ENCODE measurements at regions of chr2 and their contacts with region 1.

Region 1: GRCh38 chr2:182625814-182626213 is 90.2 kb upstream of the DNAJC10 start:
- DNase-seq: no peak
- ATAC-seq: no peak
- H3K4me3 ChIP-seq: no peak overlapping the region
- H3K27ac ChIP-seq: no peak overlapping the region
- H3K4me1 ChIP-seq: peaks cover 0 to 6% (median 0%) of the 10 kb centered on the region in 9 donors
- H3K27me3 ChIP-seq: no peaks in the 10 kb centered on the region
- CTCF ChIP-seq: no peak

Region 2: GRCh38 chr2:182447863-182448262 is 178.0 kb before region 1 on chr2:
- intact Hi-C with region 1: loop called in 1 of 10 experiments (anchors 10 kb)
- DNase-seq: no peak
- ATAC-seq: peak in 2 of 8 donors; percentile 38 to 70
- H3K4me3 ChIP-seq: no peak overlapping the region
- H3K27ac ChIP-seq: no peak overlapping the region
- H3K4me1 ChIP-seq: peaks cover 0 to 27% (median 9%) of the 10 kb centered on the region in 9 donors
- H3K27me3 ChIP-seq: no peaks in the 10 kb centered on the region
- CTCF ChIP-seq: no peak